ENCODE measurements at regions of chr3 and their contacts with region 1.

Region 1: GRCh38 chr3:15051531-15051930 is 13.6 kb downstream of the MRPS25 start:
- DNase-seq: peak in 6 of 9 donors; percentile 13 to 40 (median 27)
- ATAC-seq: peak; percentile 81
- H3K4me3 ChIP-seq: no peak overlapping the region
- H3K4me3 Mint-ChIP-seq: no peak overlapping the region
- H3K27ac ChIP-seq: no peak overlapping the region
- H3K27ac Mint-ChIP-seq: peak overlapping the region in 6 of 9 donors; percentile 32 to 87 (median 68)
- H3K4me1 ChIP-seq: peaks cover 0 to 12% of the 10 kb centered on the region in 2 donors
- H3K4me1 Mint-ChIP-seq: peaks cover 15 to 40% (median 25%) of the 10 kb centered on the region in 7 donors
- H3K27me3 ChIP-seq: no peaks in the 10 kb centered on the region
- H3K27me3 Mint-ChIP-seq: no peaks in the 10 kb centered on the region

Region 2: DNA sequence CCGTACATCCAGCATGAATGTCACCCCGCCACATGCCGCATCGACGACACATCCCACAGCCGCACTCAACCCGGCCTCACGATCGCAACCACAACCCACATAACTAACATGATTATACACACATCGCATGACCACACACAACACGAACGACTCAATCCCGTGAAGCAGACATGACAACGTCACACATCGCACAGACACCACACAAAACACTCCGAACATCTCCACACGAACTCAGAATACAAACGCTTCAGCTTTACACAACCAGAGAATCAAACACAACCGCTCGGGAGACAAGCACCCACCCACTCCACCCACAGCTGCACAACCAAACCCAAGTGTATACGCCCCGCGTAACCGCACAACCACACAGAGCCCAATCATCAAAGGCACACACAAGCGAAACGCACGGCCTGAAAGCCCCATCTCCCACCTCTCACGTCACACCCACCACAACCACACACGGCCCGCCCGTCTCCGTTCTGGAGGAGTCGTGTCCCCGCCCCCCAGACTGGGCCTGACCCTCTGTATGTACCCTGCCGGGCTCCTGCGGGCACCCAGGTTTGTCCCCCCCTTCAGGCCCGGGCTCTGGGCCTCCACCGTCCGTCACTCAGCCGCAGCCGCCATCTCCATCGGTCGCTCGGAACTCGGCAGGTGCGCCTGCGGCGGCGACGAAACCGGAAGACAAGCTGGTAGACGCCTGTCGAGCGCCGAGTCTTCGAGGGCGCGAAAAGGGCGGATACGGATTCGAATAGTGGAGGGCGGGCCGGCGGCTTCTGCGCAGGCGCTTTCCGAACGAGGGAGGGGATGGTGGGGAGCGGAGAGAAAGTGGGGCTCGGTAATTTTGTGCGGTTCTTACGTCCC is 47.2 kb after region 1 on chr3 and contains the start of gene RBSN:
- CTCF ChIA-PET with region 1: no interaction called
- POLR2A ChIA-PET with region 1: no interaction called
- intact Hi-C with region 1: loop called in 1 of 2 experiments (anchors 2 kb)
- DNase-seq: peak; percentile 87 to 96 (median 94)
- ATAC-seq: peak; percentile 87
- H3K4me3 ChIP-seq: peak within 1 kb of the TSS; percentile 83
- H3K4me3 Mint-ChIP-seq: peak within 1 kb of the TSS; percentile 90 to 99 (median 96)
- H3K27ac ChIP-seq: peak within 1 kb of the TSS; percentile 96
- H3K27ac Mint-ChIP-seq: peak within 1 kb of the TSS; percentile 90 to 99 (median 98)
- H3K4me1 ChIP-seq: peaks cover 8 to 14% of the 10 kb centered on the region in 2 donors
- H3K4me1 Mint-ChIP-seq: peaks cover 21 to 42% (median 30%) of the 10 kb centered on the region in 7 donors
- H3K27me3 ChIP-seq: no peaks in the 10 kb centered on the region
- H3K27me3 Mint-ChIP-seq: peaks cover 0 to 9% (median 2%) of the 10 kb centered on the region in 5 donors
- total RNA-seq, gene RBSN: 20.5 to 54.4 (median 39.6) TPM

Measured in naive thymus-derived CD4-positive, alpha-beta T cell (primary cell).